Naive thymus-derived CD8-positive, alpha-beta T cell (primary cell): ENCODE measurements at regions of chr10 and their contacts with region 1.

Region 1: DNA sequence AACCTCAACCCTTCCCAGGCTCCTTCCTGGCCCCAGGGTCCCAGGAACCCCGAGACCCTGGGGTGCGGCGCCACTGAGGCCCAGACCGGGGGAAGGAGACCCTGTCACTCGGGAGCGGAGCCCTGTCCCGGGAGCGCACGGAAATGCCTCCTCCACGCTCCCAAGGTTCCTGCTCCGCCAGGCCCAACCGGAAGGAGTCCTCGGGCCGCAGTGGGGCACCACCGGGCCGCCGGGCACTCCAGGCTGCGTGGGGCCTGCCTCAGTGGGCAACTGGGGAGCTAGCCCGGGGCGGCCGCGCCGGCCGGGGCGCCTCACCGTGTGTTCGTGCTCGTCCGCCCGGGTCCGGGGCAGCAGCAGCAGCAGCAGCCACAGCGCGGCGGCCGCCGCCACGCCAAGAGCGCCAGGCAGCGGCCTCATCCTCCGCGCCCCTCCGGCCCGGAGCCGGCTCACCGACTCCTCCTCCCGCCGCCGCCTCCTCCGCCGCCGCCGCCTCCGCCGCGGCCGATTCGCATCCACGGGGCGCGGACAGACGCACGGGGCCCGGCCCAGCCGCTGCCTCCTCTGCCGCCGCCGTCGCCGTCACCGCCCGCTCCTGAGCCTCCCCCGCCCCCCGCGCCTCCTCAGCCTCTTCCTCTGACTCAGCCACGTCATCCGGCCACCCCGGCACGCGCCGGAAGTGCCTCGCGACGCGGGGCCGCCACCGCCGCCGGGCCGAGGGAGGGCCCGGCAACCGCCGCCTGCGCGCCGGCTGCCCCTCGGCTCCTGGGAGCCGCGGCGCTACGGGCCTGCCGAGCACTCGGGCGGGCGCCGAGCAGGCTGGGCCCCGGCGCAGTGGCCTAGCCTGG is at the start of gene TM9SF3:
- DNase-seq: peak; percentile 84 to 96 (median 90)
- ATAC-seq: peak; percentile 80 to 82
- H3K4me3 Mint-ChIP-seq: peak within 1 kb of the TSS in 9 of 10 donors; percentile 83 to 95 (median 91)
- H3K27ac Mint-ChIP-seq: peak within 1 kb of the TSS; percentile 92 to 98 (median 96)
- H3K4me1 Mint-ChIP-seq: peaks cover 19 to 46% (median 38%) of the 10 kb centered on the region in 4 donors
- H3K27me3 Mint-ChIP-seq: no peaks in the 10 kb centered on the region
- polyA plus RNA-seq, gene TM9SF3: 61.8 to 71.2 (median 64.8) TPM

Region 2: GRCh38 chr10:96614515-96614914 is 27.9 kb after region 1 on chr10:
- POLR2A ChIA-PET with region 1: no interaction called
- DNase-seq: no peak
- ATAC-seq: no peak
- H3K4me3 Mint-ChIP-seq: no peak overlapping the region
- H3K27ac Mint-ChIP-seq: no peak overlapping the region
- H3K4me1 Mint-ChIP-seq: peaks cover 10 to 15% (median 13%) of the 10 kb centered on the region in 4 donors
- H3K27me3 Mint-ChIP-seq: no peaks in the 10 kb centered on the region

Region 3: GRCh38 chr10:96673318-96674099 is 86.9 kb after region 1 on chr10:
- POLR2A ChIA-PET with region 1: no interaction called
- DNase-seq: peak in 1 of 10 donors; percentile 32
- ATAC-seq: peak; percentile 22 to 44
- H3K4me3 Mint-ChIP-seq: peak overlapping the region in 5 of 10 donors; percentile 5 to 78 (median 13)
- H3K27ac Mint-ChIP-seq: peak overlapping the region in 6 of 10 donors; percentile 25 to 95 (median 69)
- H3K4me1 Mint-ChIP-seq: peaks cover 4 to 83% (median 18%) of the 10 kb centered on the region in 4 donors
- H3K27me3 Mint-ChIP-seq: peaks cover 0 to under 1% (median 0%) of the 10 kb centered on the region in 5 donors

Region 4: GRCh38 chr10:96831867-96832720 is 245.5 kb after region 1 on chr10 and contains the start of gene LCOR:
- POLR2A ChIA-PET with region 1: interaction called, 12 read pairs
- DNase-seq: peak; percentile 75 to 89 (median 84)
- ATAC-seq: peak; percentile 71 to 73
- H3K4me3 Mint-ChIP-seq: peak within 1 kb of the TSS; percentile 83 to 96 (median 92)
- H3K27ac Mint-ChIP-seq: peak within 1 kb of the TSS; percentile 91 to 98 (median 95)
- H3K4me1 Mint-ChIP-seq: peaks cover 25 to 56% (median 49%) of the 10 kb centered on the region in 4 donors
- H3K27me3 Mint-ChIP-seq: no peaks in the 10 kb centered on the region
- polyA plus RNA-seq, gene LCOR: 18.9 to 26.6 (median 19.3) TPM